A673 (cell line): ENCODE measurements at regions of chr7 and their contacts with region 1.

Region 1: DNA sequence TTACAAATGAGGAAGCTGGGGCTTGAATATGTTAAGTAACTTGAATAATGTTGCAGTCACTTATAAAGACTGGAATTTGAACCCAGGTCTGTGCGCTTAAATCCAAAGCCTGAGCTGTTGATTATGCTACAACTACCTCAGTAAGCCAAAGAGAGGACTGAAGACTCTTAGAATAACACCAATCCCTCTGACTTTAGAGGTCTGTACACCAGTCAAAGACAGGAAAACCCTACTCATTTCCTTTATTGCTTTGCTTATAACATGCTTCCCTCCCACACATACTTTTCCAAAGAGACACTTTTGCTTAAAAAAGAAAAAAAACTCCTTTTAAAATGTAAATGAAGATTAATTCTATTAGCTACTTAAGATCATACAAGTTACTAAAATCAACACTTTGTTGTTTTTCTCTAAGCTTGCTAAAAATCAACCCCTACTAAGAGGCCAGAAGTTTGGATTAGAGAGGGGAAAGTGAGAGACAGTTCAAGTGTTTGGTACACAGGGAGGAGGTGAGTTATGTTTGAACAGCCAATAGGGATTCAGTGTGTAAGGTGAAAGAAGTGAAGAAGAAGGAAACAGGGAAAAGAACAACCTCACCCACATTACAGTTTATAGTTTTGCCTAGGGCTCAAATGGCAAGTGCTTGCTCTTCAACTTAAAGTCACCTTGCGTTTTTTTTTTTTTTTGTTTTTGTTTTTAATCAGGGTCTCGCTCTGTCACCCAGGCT is 74.8 kb downstream of the MDH2 start:
- DNase-seq: no peak
- H3K4me3 ChIP-seq: no peak overlapping the region
- H3K27ac ChIP-seq: no peak overlapping the region
- H3K4me1 ChIP-seq: no peaks in the 10 kb centered on the region
- H3K27me3 ChIP-seq: no peaks in the 10 kb centered on the region
- CTCF ChIP-seq: no peak

Region 2: DNA sequence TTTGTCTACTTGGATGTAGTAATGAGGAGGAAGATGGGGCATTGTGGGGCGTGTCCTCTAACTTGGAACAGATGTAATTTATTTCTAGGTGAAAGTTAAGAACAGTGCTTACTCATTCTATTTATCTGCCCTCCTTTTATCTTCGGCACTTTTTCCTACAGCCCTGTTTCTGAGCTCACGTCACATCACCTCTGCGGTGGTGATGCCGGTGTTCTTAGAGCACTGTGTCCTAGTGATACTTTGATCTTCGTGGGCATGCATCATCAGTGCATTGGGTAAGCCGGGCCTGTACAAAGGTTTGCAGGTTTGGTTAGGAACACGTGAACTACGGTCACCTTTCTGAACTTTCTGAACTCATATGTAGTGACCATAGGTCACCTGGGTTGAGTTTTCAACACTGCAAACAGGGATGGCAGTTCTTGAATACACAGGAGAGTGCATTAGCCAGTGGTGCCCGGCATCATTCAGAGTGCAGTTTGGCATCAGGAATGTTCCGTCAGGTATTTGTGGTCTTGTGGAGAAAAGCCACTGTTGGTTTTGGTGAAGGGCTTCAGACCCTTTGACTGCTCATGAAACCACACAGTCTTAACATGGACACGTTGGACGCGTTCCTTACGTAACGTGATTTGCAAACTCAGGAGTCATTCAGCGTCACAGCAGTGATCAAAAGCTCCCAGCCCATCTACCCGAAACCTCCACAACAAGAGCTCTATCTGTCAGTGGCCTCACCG is 202.1 kb before region 1 on chr7:
- CTCF ChIA-PET with region 1: no interaction called
- POLR2A ChIA-PET with region 1: interaction called, 12 read pairs
- intact Hi-C with region 1: no loop called
- DNase-seq: no peak
- H3K4me3 ChIP-seq: no peak overlapping the region
- H3K27ac ChIP-seq: no peak overlapping the region
- H3K4me1 ChIP-seq: no peaks in the 10 kb centered on the region
- H3K27me3 ChIP-seq: no peaks in the 10 kb centered on the region
- CTCF ChIP-seq: no peak

Region 3: GRCh38 chr7:77326696-77327628 is 1204.3 kb after region 1 on chr7:
- CTCF ChIA-PET with region 1: no interaction called
- POLR2A ChIA-PET with region 1: interaction called, 19 read pairs
- intact Hi-C with region 1: no loop called
- DNase-seq: no peak
- H3K4me3 ChIP-seq: no peak overlapping the region
- H3K27ac ChIP-seq: no peak overlapping the region
- H3K4me1 ChIP-seq: peaks cover 41% of the 10 kb centered on the region
- H3K27me3 ChIP-seq: no peaks in the 10 kb centered on the region
- CTCF ChIP-seq: no peak